ENCODE measurements at regions of chr2 and their contacts with region 1.

Region 1: DNA sequence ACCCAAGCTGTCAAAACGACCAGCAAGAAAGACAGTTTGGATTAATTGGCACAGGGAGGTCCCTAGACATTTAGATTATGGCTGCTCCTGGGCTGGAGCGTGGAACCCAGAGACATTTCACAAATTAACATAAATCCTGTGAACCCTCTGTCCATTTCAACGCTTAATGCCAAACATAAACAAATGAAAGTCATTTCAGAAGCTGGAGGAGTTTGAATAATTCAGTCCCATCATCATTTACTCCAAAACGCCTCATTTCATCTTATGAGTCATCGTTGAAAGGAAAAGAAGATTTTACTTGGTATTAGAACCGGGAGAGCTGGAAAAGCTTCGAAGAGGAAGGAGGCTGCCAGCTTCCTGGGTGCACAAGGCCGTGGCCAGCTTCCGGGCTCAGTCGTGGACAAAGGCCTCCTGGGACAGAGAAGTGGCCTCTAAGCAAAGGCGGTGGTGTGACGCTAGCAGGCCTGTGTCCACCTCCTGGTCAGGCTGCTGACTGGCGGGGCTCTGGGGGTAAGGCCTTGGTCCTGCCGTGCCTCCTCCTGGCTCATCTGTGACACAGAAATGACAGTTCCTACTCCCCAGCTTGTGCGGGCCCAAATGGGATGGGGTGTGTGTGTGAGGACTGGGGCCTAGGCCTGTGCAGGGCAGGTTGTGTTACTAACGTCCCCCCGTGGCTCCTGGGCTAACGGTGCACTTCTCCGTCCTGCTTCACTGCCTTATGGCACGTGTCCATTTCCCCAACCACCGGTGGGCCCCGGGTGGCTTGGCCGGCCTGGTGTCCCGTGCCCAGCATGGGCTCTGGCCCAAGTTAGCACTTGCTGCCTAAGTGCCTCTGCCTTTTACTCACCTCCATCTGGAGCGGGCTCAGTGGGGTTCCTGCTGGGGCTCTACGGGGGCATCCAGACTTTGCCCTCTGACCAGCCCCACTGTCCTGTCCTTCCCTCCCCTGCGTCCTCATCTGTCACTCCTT is 71.6 kb downstream of the RRM2 start:
- DNase-seq: no peak
- H3K4me3 ChIP-seq: no peak overlapping the region
- H3K4me3 Mint-ChIP-seq: no peak overlapping the region
- H3K27ac Mint-ChIP-seq: no peak overlapping the region
- H3K4me1 ChIP-seq: no peaks in the 10 kb centered on the region
- H3K4me1 Mint-ChIP-seq: peaks cover 6% of the 10 kb centered on the region
- H3K27me3 ChIP-seq: no peaks in the 10 kb centered on the region
- H3K27me3 Mint-ChIP-seq: no peaks in the 10 kb centered on the region
- CTCF ChIP-seq: no peak

Region 2: DNA sequence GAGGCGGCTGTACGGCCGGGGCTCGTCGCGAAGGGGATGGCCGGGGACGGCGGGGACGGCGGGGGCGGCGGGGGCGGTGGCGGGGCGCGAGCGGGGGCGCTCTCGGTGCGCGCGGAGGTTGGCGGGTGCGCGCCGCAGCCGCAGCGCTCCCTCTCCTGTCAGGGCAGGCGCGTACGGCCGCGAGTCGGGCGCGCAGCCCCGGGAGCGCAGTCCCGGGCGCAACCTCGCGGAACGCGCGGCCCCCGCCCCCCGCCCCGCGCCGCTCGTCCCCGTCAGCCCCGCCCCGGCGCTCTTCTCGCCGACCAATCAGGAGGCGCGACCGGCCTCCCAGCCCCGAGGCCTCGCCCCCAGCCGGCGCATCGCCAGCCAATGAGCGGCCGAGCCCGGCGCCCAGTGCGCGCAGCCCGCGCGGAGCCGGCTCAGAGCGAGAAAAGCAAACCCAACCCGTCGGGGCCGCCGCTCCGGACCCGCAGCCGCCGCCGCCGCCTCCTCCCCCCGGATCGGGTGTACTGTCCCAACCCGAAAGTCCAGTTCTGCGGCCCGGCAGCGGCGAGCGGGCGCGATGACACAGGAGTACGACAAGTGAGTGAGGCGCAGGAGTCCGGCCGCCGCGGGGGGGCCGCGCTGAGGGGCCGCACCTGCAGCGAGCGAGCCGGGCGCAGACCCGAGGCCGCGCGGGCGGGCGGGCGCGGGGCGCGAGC is 242.7 kb before region 1 on chr2 and contains the start of gene GRHL1:
- CTCF ChIA-PET with region 1: no interaction called
- POLR2A ChIA-PET with region 1: no interaction called
- intact Hi-C with region 1: no loop called
- DNase-seq: peak; percentile 92 to 98
- H3K4me3 ChIP-seq: peak within 1 kb of the TSS; percentile 86
- H3K4me3 Mint-ChIP-seq: peak within 1 kb of the TSS; percentile 79
- H3K27ac Mint-ChIP-seq: peak within 1 kb of the TSS; percentile 7
- H3K4me1 ChIP-seq: peaks cover 26% of the 10 kb centered on the region
- H3K4me1 Mint-ChIP-seq: peaks cover 14% of the 10 kb centered on the region
- H3K27me3 ChIP-seq: no peaks in the 10 kb centered on the region
- H3K27me3 Mint-ChIP-seq: peaks cover 4% of the 10 kb centered on the region
- CTCF ChIP-seq: no peak
- total RNA-seq, gene GRHL1: 10.5 and 11.6 TPM in 2 replicates

Region 3: DNA sequence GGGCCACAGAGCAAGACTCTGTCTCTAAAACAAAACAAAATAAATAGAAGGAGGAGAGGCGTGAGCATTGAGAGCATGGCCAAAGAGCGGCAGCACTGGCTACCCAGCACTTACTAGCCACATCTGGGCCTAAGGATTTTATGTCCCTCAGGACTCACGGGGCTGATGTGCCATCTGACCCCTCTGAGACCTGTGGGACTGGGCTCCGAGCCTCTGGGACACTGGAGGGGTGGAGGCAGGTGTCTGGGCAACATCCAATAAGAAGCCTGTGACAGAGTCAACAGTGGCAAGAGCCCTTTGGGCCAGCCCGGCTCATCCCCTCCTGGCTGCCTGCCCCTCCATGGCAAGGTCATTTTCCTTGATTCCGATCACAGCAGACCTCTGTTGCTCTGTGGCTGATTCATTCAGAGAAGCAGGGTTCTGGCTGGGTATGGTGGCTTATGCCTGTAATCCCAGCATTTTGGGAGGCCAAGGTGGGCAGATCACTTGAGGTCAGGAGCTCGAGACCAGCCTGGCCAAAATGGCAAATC is 10.9 kb before region 1 on chr2:
- CTCF ChIA-PET with region 1: interaction called, 3 read pairs
- POLR2A ChIA-PET with region 1: no interaction called
- intact Hi-C with region 1: loop called (anchors 1 kb)
- DNase-seq: no peak
- H3K4me3 ChIP-seq: no peak overlapping the region
- H3K4me3 Mint-ChIP-seq: no peak overlapping the region
- H3K27ac Mint-ChIP-seq: no peak overlapping the region
- H3K4me1 ChIP-seq: no peaks in the 10 kb centered on the region
- H3K4me1 Mint-ChIP-seq: no peaks in the 10 kb centered on the region
- H3K27me3 ChIP-seq: no peaks in the 10 kb centered on the region
- H3K27me3 Mint-ChIP-seq: no peaks in the 10 kb centered on the region
- CTCF ChIP-seq: no peak

Region 4: GRCh38 chr2:10344105-10345066 is 150.2 kb after region 1 on chr2:
- CTCF ChIA-PET with region 1: no interaction called
- POLR2A ChIA-PET with region 1: no interaction called
- intact Hi-C with region 1: no loop called
- DNase-seq: no peak
- H3K4me3 ChIP-seq: no peak overlapping the region
- H3K4me3 Mint-ChIP-seq: no peak overlapping the region
- H3K27ac Mint-ChIP-seq: no peak overlapping the region
- H3K4me1 ChIP-seq: no peaks in the 10 kb centered on the region; the same call in 1 of the 2 replicates
- H3K4me1 Mint-ChIP-seq: no peaks in the 10 kb centered on the region
- H3K27me3 ChIP-seq: no peaks in the 10 kb centered on the region
- H3K27me3 Mint-ChIP-seq: no peaks in the 10 kb centered on the region
- CTCF ChIP-seq: no peak